AG04449 (cell line): ENCODE measurements at regions of chr11 and their contacts with region 1.

Region 1: DNA sequence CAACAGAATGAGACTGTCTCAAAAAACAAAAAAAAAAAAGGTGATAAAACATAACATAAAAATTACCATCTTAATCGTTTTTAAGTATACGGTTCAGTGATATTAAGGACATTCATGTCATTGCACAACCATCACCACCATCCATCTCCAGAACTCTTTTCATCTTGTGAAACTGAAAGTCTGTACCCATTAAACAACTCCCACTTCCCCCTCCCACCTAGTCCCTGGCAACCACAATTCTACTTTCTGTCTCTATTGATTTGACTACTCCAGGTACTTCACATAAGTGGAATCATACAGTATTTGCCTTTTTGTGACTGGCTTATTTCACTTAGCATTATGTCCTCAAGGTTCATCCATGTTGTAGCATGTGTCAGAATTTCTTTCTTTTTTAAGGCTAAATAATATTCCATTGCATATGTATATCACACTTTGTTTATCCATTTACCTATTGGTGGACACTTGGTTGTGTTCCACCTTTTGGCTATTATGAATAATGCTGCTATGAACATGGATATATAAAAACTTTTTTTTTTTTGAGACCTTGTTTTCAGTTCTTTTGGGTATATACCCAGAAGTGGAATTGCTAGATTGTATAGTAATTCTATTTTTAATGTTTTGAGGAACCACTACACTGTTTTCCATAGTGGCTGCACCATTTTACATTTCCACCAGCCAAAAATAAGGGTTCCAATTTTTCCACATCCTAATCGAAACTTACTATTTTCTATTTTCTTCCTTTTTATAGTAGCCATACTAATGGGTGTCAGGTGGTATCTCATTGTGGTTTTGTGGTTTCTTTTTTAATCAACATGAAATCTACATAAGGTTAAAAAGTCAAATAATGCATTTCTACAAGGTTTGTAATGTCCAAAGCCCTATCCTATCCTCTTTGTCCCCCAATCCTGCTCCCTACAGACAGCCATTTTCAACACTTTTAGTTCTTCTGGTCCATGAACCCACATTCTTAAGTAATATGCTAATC is 23.4 kb upstream of the PIK3C2A start:
- DNase-seq: no peak
- H3K4me3 ChIP-seq: no peak overlapping the region
- CTCF ChIP-seq: no peak

Region 2: GRCh38 chr11:17244046-17244445 is 12.9 kb after region 1 on chr11:
- CTCF ChIA-PET with region 1: interaction called, 32 read pairs
- POLR2A ChIA-PET with region 1: no interaction called
- DNase-seq: no peak
- H3K4me3 ChIP-seq: no peak overlapping the region
- CTCF ChIP-seq: no peak

Region 3: GRCh38 chr11:17280494-17281127 is 49.5 kb after region 1 on chr11:
- CTCF ChIA-PET with region 1: interaction called, 10 read pairs
- POLR2A ChIA-PET with region 1: no interaction called
- DNase-seq: no peak
- H3K4me3 ChIP-seq: no peak overlapping the region
- CTCF ChIP-seq: no peak

Region 4: DNA sequence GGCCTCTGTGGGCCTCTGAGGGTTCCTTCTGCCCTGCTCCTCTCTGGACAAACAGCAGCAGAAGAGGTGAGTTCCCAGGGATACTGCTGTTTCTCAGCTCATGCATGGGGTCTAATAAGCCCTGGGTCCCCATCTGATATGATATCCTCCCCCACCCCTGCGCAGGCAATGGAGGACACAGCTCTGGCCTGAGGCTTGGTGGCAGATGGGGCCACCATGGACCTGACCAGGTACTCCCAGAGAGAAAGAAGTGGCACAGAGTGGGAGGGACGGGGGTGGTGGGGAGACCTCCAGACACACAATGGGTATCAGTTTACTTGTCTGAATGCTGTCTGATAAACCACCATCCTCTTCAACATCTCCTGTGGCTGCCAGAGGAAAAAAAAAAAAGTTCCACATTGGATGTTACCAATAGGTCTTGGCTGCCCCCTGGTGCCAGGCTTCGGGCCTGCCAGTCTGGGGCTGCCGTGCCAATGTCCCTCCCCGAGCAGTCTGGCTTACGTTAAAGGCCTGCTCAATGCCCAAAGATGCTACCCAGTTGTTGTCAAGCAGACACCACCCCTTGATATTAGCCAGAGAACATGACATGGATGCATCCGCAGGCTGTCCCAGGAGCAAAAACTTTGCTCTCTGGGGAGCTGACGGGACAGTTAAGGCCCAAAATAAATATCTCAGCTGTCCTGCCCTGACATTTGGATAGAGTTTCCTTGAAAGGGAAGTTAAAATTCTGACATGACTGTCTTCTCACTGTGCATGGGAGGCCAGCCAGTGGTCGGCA is 273.4 kb after region 1 on chr11:
- CTCF ChIA-PET with region 1: interaction called, 52 read pairs
- POLR2A ChIA-PET with region 1: no interaction called
- DNase-seq: no peak
- H3K4me3 ChIP-seq: no peak overlapping the region
- CTCF ChIP-seq: peak; percentile 87